Activated B cell treated with CpG ODN at 0.5 μM for 24 hours (primary cell): ENCODE measurements at regions of chrX and their contacts with region 1.

Region 1: DNA sequence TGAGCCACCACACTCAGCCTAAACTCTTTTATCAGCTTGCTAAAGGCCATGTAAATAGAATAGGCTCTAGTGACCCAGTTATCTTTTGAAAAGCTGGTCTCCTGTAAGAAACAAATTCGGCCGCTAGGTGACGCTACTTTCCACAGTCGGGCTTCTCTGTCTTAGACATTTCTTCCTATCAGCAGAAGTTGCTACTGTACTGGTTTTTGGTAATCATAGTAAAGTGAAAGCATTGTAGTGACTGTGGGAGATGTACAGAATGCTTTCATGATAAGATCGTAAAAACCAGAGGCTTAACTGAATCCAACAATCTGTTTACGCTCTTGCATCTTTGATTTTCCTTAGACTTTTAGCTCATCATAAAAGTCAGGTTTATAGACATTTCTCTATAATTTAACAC is 82.6 kb downstream of the GK start:
- DNase-seq: peak; percentile 26
- ATAC-seq: peak; percentile 56
- H3K4me3 Mint-ChIP-seq: no peak overlapping the region
- H3K27ac Mint-ChIP-seq: no peak overlapping the region
- H3K4me1 Mint-ChIP-seq: no peaks in the 10 kb centered on the region
- H3K27me3 Mint-ChIP-seq: no peaks in the 10 kb centered on the region
- CTCF ChIP-seq: no peak

Region 2: DNA sequence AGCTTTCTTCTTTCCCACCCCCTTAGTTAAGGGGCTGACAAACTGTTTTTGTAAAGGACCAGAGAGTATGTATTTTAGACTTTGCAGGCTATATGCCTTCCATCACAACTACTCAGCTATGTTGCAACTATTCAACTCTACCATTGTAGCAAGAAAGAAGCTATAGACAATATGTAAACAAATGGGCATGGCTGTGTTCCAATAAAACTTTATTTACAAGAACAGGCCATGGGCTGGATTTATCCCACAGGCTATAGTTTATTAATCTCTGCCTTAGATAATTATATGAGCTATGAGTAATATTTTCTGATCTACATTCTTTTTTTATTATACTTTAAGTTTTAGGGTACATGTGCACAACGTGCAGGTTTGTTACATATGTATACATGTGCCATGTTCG is 31.6 kb after region 1 on chrX:
- CTCF ChIA-PET with region 1: no interaction called
- POLR2A ChIA-PET with region 1: no interaction called
- intact Hi-C with region 1: no loop called
- DNase-seq: no peak
- ATAC-seq: no peak
- H3K4me3 Mint-ChIP-seq: no peak overlapping the region
- H3K27ac Mint-ChIP-seq: no peak overlapping the region
- H3K4me1 Mint-ChIP-seq: peaks cover 4% of the 10 kb centered on the region
- H3K27me3 Mint-ChIP-seq: no peaks in the 10 kb centered on the region
- CTCF ChIP-seq: no peak

Region 3: GRCh38 chrX:30822068-30822681 is 86.3 kb after region 1 on chrX:
- CTCF ChIA-PET with region 1: interaction called, 9 read pairs
- POLR2A ChIA-PET with region 1: no interaction called
- intact Hi-C with region 1: loop called (anchors 1 kb)
- DNase-seq: no peak
- ATAC-seq: peak; percentile 89
- H3K4me3 Mint-ChIP-seq: no peak overlapping the region
- H3K27ac Mint-ChIP-seq: peak overlapping the region; percentile 88
- H3K4me1 Mint-ChIP-seq: peaks cover 25% of the 10 kb centered on the region
- H3K27me3 Mint-ChIP-seq: no peaks in the 10 kb centered on the region
- CTCF ChIP-seq: no peak

Region 4: GRCh38 chrX:30865015-30865414 is 129.2 kb after region 1 on chrX:
- CTCF ChIA-PET with region 1: interaction called, 11 read pairs
- POLR2A ChIA-PET with region 1: no interaction called
- intact Hi-C with region 1: loop called (anchors 1 kb)
- DNase-seq: no peak
- ATAC-seq: no peak
- H3K4me3 Mint-ChIP-seq: no peak overlapping the region
- H3K27ac Mint-ChIP-seq: peak overlapping the region; percentile 63
- H3K4me1 Mint-ChIP-seq: peaks cover 18% of the 10 kb centered on the region
- H3K27me3 Mint-ChIP-seq: no peaks in the 10 kb centered on the region
- CTCF ChIP-seq: no peak

Region 5: DNA sequence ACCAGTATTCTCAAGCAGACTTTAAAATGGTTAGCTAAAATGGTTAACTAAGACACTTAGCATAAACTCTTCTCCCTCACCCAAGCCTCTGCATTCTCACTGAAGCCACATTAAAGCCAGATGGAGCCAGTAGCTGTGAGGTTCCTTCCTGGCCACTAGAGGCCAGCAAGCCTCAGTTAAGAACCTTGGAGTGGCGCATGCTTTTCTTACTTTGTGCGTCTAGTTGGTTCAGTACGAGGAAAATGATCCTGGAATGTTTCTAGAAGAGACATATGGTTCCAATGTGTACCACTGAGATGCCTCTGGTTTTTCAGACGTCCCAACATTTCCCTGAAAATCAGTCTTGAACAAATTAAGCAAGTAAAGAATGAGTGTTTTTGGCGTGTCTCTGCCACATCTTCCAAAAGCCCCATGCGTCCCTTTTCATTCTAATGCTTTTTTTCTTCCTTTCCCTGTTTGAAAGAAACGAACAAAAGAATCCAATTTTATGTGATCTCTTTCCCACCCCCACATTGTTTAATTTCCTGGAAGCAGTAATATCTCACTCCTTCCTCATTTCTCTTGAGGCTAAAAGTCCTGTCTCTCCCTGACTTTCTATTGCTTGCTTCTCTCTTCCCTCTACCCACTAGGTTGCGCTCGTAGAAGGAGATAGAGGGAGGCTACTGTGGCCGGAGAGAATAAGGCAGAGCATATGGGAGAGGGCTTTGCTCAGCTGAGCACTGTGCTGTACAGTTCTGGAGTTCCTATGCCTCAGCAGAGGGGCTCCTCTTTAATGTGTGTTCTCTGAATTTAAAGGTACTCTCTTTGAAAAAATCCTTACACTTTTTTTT is 236.2 kb after region 1 on chrX:
- CTCF ChIA-PET with region 1: interaction called, 5 read pairs
- POLR2A ChIA-PET with region 1: no interaction called
- intact Hi-C with region 1: loop called (anchors 5 kb)
- DNase-seq: no peak
- ATAC-seq: peak; percentile 57
- H3K4me3 Mint-ChIP-seq: peak overlapping the region; percentile 75
- H3K27ac Mint-ChIP-seq: no peak overlapping the region
- H3K4me1 Mint-ChIP-seq: peaks cover 6% of the 10 kb centered on the region
- H3K27me3 Mint-ChIP-seq: no peaks in the 10 kb centered on the region
- CTCF ChIP-seq: no peak

Region 6: GRCh38 chrX:31036895-31037294 is 301.1 kb after region 1 on chrX:
- CTCF ChIA-PET with region 1: interaction called, 13 read pairs
- POLR2A ChIA-PET with region 1: no interaction called
- intact Hi-C with region 1: loop called (anchors 5 kb)
- DNase-seq: no peak
- ATAC-seq: peak; percentile 42
- H3K4me3 Mint-ChIP-seq: no peak overlapping the region
- H3K27ac Mint-ChIP-seq: no peak overlapping the region
- H3K4me1 Mint-ChIP-seq: peaks cover 2% of the 10 kb centered on the region
- H3K27me3 Mint-ChIP-seq: no peaks in the 10 kb centered on the region
- CTCF ChIP-seq: no peak

Region 7: DNA sequence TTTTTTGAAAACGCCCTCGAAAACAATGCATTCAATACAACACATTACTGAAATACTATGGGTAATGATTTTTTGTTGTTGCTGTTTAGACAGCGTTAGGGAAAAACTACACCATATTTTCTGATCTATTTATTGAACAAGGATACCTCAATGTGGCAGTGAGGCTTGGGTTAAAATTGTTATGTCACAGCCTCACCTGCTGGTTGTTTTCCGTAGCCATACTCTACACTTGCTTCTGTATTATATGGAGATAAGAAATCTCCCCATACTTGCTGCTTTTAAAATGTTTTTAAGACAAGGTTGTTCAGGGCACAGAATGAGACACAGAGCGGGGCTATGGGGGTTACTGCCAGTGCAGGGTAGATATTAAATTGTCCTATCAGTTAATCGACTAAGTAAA is 557.6 kb after region 1 on chrX:
- CTCF ChIA-PET with region 1: no interaction called
- POLR2A ChIA-PET with region 1: no interaction called
- intact Hi-C with region 1: loop called (anchors 5 kb)
- DNase-seq: no peak
- ATAC-seq: peak; percentile 58
- H3K4me3 Mint-ChIP-seq: no peak overlapping the region
- H3K27ac Mint-ChIP-seq: no peak overlapping the region
- H3K4me1 Mint-ChIP-seq: no peaks in the 10 kb centered on the region
- H3K27me3 Mint-ChIP-seq: no peaks in the 10 kb centered on the region
- CTCF ChIP-seq: no peak

Region 8: DNA sequence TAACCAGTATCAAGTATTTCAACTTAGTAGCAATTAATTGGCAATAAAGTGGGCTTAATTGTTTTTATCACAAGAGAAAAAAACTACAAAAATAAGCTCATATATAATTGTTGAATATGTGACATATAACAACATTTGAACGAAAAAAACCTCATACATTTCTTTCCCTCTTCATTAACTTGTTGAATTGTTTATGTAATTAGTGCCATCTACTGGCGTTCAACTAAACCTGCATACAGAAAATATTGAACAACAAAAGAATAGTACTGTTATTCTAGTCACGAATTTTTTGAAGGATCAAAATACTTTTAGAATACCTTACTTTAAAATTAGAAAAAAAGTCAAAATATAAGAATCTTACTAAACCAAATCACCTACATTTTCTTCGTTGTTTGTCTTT is 922.5 kb after region 1 on chrX:
- CTCF ChIA-PET with region 1: interaction called, 3 read pairs
- POLR2A ChIA-PET with region 1: no interaction called
- intact Hi-C with region 1: loop called (anchors 2 kb)
- DNase-seq: no peak
- ATAC-seq: no peak
- H3K4me3 Mint-ChIP-seq: no peak overlapping the region
- H3K27ac Mint-ChIP-seq: no peak overlapping the region
- H3K4me1 Mint-ChIP-seq: no peaks in the 10 kb centered on the region
- H3K27me3 Mint-ChIP-seq: no peaks in the 10 kb centered on the region
- CTCF ChIP-seq: no peak